ENCODE measurements at regions of chr1 and their contacts with region 1.

Region 1: DNA sequence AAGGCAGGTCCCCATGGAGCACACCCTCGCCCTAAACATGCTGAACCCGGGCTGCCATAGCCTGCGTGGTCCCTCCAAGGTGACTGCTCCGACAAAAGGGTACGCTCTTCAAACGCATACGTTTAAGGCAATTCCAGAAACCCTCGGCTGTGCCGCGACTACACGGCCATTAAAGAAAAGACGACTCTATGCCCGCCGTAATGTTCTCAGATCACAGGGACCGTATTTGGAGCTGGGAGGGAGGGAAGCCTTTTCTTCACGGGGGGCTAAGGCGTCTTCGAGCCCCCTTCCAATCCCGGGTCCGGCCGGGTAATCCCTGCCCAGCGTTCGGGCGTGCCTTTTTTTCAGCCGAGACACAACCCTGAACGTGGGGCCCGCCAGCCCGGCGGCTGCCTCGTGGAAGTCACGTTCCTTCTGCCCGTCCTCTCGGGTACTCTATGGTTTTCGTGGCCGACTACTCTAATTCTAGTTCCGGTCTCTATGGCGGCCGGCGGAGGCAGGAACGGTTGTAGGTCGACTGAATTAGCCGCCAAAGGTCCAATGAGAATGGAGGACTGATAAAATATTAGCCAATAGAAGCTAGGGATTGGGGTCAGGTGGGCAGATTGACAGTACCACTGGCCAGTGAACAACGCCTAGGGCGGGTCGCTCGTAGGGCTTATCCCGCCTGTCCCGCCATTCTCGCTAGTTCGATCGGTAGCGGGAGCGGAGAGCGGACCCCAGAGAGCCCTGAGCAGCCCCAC is at the start of gene YBX1:
- DNase-seq: peak; percentile 96
- H3K4me3 Mint-ChIP-seq: peak within 1 kb of the TSS; percentile 96
- H3K27ac Mint-ChIP-seq: peak within 1 kb of the TSS; percentile 98
- H3K4me1 Mint-ChIP-seq: peaks cover 51% of the 10 kb centered on the region
- H3K27me3 Mint-ChIP-seq: no peaks in the 10 kb centered on the region
- total RNA-seq, gene YBX1: 607 to 643 TPM

Region 2: GRCh38 chr1:41118645-41119044 is 1563.3 kb before region 1 on chr1:
- CTCF ChIA-PET with region 1: no interaction called
- POLR2A ChIA-PET with region 1: no interaction called
- DNase-seq: no peak
- H3K4me3 Mint-ChIP-seq: no peak overlapping the region
- H3K27ac Mint-ChIP-seq: no peak overlapping the region
- H3K4me1 Mint-ChIP-seq: no peaks in the 10 kb centered on the region
- H3K27me3 Mint-ChIP-seq: no peaks in the 10 kb centered on the region

Region 3: DNA sequence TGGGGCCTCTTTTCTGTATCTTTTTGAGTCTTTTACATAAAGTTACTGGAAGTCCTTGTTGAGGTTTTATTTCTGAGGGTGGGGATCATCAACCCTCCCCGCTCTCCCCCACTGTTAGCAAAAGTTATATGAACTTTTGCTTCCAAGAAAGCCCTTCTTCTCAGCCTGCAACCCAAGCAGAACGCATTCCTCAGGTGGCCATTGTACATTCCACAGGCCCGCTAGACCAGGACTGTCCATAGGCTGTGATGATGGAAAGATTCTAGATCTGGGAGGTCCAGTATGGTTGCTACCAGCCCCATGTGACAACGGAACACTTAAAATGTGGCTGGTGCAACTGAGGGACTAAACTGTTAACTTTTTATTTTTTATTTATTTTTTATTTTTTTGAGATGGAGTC is 11.5 kb before region 1 on chr1:
- CTCF ChIA-PET with region 1: interaction called, 18 read pairs
- POLR2A ChIA-PET with region 1: interaction called, 3 read pairs
- DNase-seq: no peak
- H3K4me3 Mint-ChIP-seq: no peak overlapping the region
- H3K27ac Mint-ChIP-seq: no peak overlapping the region
- H3K4me1 Mint-ChIP-seq: peaks cover 7% of the 10 kb centered on the region
- H3K27me3 Mint-ChIP-seq: no peaks in the 10 kb centered on the region

Measured in activated CD4-positive, alpha-beta T cell treated with anti-CD3 and anti-CD28 coated beads, Interleukin-2, amount 10 ng/mL, durations not matched to agents 7 days and 5 days (primary cell).